Activated B cell treated with CpG ODN at 0.5 μM for 24 hours (primary cell): ENCODE measurements at regions of chr11 and their contacts with region 1.

Region 1: DNA sequence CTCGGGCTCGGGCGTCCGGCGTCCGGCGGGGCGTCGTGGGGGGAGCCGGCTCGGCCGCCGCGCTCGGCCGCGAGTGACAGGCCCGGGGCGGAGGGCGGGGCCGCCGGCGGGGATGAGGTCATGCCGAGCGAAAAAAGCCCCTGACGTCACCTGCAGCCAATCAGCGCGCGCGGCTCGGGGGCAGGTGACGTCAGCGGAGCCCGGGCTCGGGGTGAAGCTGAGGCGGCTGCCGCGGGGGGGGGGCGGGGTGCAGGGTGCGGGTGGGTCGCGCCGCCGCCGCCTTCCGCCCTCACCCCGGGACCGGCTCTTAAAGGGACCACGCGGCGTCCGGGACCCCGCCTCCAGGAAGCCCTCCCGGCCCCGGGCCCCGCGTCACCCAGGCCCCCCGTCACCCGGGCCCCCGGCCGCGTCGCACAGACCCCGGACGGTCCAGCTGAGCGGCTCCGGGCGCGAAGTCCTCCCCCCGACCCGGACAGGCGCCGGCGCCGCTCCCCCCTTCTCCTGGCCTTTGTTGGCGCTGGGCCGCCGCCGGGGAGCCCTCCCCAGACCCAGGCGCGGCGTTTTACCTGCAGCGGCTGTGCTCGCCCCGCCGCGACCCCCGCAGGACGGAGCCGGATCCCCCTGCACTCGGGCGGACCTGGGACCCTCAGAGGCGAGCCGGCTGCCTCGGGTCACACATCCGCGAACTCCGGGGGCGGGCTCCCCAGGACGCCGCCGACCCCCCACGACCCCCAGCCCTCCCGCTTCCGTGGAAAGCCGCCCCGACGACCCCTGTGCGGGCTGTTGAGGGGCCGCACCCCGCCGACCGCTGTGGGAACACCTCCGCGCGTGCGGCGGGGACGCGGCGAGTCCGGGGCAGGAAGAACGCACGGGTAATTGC is at the start of gene DUSP8:
- DNase-seq: peak; percentile 89
- ATAC-seq: peak; percentile 43
- H3K4me3 Mint-ChIP-seq: peak within 1 kb of the TSS; percentile 64
- H3K27ac Mint-ChIP-seq: no peak within 1 kb of the TSS
- H3K4me1 Mint-ChIP-seq: peaks cover 12% of the 10 kb centered on the region
- H3K27me3 Mint-ChIP-seq: peaks cover 22% of the 10 kb centered on the region
- CTCF ChIP-seq: no peak
- total RNA-seq, gene DUSP8: 1.3 and 1.7 TPM in 2 replicates

Region 2: GRCh38 chr11:765025-765801 is 807.2 kb before region 1 on chr11:
- CTCF ChIA-PET with region 1: no interaction called
- POLR2A ChIA-PET with region 1: no interaction called
- intact Hi-C with region 1: no loop called
- DNase-seq: peak; percentile 55
- ATAC-seq: peak; percentile 91
- H3K4me3 Mint-ChIP-seq: no peak overlapping the region
- H3K27ac Mint-ChIP-seq: no peak overlapping the region
- H3K4me1 Mint-ChIP-seq: peaks cover 3% of the 10 kb centered on the region
- H3K27me3 Mint-ChIP-seq: no peaks in the 10 kb centered on the region
- CTCF ChIP-seq: no peak

Region 3: GRCh38 chr11:1087961-1088908 is 484.2 kb before region 1 on chr11:
- CTCF ChIA-PET with region 1: no interaction called
- POLR2A ChIA-PET with region 1: no interaction called
- intact Hi-C with region 1: no loop called
- DNase-seq: no peak
- ATAC-seq: no peak
- H3K4me3 Mint-ChIP-seq: no peak overlapping the region
- H3K27ac Mint-ChIP-seq: no peak overlapping the region
- H3K4me1 Mint-ChIP-seq: no peaks in the 10 kb centered on the region
- H3K27me3 Mint-ChIP-seq: no peaks in the 10 kb centered on the region
- CTCF ChIP-seq: no peak

Region 4: GRCh38 chr11:1202776-1203504 is 369.5 kb before region 1 on chr11:
- CTCF ChIA-PET with region 1: interaction called, 48 read pairs
- POLR2A ChIA-PET with region 1: no interaction called
- intact Hi-C with region 1: loop called (anchors 1 kb)
- DNase-seq: peak; percentile 72
- ATAC-seq: peak; percentile 94
- H3K4me3 Mint-ChIP-seq: no peak overlapping the region
- H3K27ac Mint-ChIP-seq: no peak overlapping the region
- H3K4me1 Mint-ChIP-seq: no peaks in the 10 kb centered on the region
- H3K27me3 Mint-ChIP-seq: no peaks in the 10 kb centered on the region
- CTCF ChIP-seq: no peak

Region 5: DNA sequence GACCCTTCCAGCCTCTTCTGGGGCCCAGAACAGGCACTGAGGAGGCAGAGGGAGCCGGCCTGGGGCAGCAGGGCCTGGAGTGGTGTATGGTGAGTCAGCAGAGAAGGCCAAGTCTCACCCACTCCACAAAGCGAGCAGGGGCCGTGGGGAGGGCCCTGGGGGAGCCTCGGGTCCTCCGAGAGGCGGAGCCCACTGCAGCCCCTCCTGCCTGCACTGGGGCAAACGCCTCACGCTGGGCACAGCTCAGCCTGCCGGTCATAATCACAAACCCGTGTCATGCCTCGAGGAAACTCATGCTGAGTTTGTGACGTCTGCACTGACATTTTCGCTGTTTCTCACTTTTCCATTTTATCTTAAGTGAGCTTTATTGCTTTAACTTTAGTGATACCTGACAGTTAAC is 301.4 kb before region 1 on chr11:
- CTCF ChIA-PET with region 1: no interaction called
- POLR2A ChIA-PET with region 1: no interaction called
- intact Hi-C with region 1: no loop called
- DNase-seq: no peak
- ATAC-seq: no peak
- H3K4me3 Mint-ChIP-seq: no peak overlapping the region
- H3K27ac Mint-ChIP-seq: no peak overlapping the region
- H3K4me1 Mint-ChIP-seq: peaks cover 1% of the 10 kb centered on the region
- H3K27me3 Mint-ChIP-seq: no peaks in the 10 kb centered on the region
- CTCF ChIP-seq: no peak

Region 6: DNA sequence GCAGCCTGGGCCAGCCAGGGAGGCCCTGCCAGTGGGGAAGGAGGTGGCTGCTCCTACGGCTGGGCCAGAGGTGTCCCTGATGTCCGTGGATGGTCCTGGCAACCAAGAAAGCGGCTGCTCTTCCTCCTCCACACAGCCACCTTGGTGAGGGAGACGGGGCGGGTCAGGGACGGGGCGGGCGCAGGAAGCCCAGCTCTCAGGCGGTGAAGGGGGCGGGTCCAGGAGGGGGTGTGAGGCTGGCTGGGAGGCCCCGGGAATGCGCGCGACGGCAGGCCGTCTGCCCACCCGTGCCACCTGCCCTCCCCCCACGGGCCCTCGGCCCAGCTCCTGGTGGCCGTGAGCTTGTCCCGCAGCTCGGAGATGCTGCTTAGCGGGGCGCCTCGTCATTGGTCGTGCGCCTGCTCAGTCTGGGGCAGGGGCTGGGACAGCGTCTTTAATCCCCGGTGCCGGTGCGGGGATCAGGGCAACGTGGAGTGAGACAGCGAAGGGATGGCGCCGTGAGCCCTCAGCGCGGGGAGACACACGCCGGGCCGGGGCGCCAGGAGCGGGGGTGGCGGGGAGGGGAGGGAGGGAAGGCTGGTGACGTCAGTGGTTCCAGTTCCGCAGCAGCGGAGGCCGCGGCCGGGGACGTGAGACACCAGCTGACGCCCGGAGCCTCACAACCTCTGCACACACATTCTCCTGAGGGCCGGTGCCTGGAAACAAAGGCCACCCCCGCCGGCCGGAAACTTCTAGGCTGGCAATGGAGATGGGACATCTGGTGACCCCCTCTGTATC is 189.4 kb before region 1 on chr11:
- CTCF ChIA-PET with region 1: interaction called, 3 read pairs
- POLR2A ChIA-PET with region 1: no interaction called
- intact Hi-C with region 1: loop called (anchors 2 kb)
- DNase-seq: peak; percentile 68
- ATAC-seq: peak; percentile 74
- H3K4me3 Mint-ChIP-seq: peak overlapping the region; percentile 85
- H3K27ac Mint-ChIP-seq: peak overlapping the region; percentile 91
- H3K4me1 Mint-ChIP-seq: peaks cover 31% of the 10 kb centered on the region
- H3K27me3 Mint-ChIP-seq: peaks cover 1% of the 10 kb centered on the region
- CTCF ChIP-seq: no peak

Region 7: DNA sequence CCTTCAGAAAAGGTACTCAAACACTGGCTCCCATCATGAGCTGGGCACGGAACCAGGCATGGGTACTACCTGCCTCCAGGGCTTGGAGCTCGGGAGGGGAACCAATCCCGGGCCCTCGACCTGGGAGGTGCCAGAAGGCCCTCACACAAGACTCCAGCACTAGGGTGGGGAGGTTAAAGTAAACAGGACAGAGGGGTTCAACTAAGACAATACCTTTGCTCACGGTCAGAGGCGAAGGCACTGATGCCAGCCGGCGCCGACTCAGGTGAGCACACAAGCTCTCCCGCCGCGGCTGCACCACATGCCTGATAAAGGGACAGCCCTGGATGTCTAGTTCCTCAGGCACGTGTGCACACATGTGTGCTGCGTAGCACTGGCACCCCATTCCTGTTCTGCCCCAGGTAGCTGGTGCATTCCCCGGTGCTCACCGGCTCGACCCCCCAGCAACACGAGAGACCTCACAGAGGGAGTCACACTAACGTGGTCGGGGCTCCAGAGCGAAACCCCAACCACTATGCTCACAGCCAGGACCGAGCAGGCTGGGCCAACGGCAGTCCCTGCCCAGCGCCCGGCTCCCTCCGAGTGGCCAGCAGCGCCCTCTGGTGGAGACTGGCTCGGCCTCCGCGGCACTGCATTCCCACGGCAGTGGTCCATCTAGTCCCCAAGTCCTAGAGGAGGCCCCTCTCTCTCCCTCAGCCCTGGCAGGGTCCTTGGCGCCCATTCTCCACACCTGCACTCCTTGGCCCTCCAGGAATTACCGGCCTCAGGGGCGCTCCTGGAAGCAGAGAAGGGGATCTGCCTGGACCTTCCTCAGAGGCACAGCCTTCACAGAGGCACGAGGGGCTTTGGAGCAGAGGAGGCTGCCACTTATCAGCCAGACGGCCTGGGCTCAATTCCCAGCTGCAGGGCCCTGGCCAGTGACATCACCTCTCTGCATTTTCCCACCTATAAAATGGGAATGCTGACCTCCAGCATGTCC is 57.1 kb before region 1 on chr11:
- CTCF ChIA-PET with region 1: interaction called, 12 read pairs
- POLR2A ChIA-PET with region 1: no interaction called
- intact Hi-C with region 1: no loop called
- DNase-seq: peak; percentile 74
- ATAC-seq: peak; percentile 87
- H3K4me3 Mint-ChIP-seq: no peak overlapping the region
- H3K27ac Mint-ChIP-seq: no peak overlapping the region
- H3K4me1 Mint-ChIP-seq: peaks cover 52% of the 10 kb centered on the region
- H3K27me3 Mint-ChIP-seq: no peaks in the 10 kb centered on the region
- CTCF ChIP-seq: peak; percentile 53

Region 8: GRCh38 chr11:1546536-1547400 is 25.7 kb before region 1 on chr11:
- CTCF ChIA-PET with region 1: interaction called, 35 read pairs
- POLR2A ChIA-PET with region 1: interaction called, 9 read pairs
- intact Hi-C with region 1: loop called (anchors 1 kb)
- DNase-seq: peak; percentile 50
- ATAC-seq: peak; percentile 67
- H3K4me3 Mint-ChIP-seq: peak overlapping the region; percentile 19
- H3K27ac Mint-ChIP-seq: no peak overlapping the region
- H3K4me1 Mint-ChIP-seq: peaks cover 13% of the 10 kb centered on the region
- H3K27me3 Mint-ChIP-seq: peaks cover 28% of the 10 kb centered on the region
- CTCF ChIP-seq: no peak

Region 9: DNA sequence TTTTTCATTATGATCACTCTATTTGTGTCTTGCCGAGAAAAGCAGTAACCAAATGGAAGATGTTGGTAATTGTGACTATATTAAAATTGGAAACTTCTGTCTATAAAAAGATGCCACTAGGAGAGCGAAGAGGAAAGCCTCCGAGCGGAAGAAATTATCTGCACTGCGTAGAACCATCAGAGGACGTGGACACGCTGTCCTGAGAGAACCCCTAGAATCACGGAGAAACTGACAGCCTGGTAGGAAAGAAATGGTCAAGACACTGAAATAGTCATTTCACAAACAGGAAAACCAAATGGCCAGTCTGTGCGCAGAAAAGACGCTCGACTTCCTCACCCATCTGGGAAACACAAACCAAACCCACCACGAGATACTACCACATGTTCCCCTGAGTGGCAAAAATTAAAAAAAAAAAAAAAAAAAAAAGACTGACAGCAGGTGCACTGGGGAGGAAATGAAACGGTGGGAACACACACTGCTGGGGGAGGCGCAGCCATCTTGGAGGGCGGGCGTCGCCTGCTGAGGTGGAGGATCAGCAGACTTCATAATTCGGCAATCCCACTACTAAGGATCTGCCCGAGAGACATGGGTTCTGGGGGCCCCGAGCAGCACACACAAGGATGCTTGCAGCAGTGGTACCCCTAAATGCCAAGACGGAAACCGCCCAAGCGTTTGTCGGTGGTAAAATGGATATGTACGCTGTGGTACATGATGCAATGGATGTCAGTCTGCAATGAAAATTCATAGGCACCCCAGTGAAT is 156.7 kb after region 1 on chr11:
- CTCF ChIA-PET with region 1: no interaction called
- POLR2A ChIA-PET with region 1: no interaction called
- intact Hi-C with region 1: no loop called
- DNase-seq: no peak
- ATAC-seq: peak; percentile 78
- H3K4me3 Mint-ChIP-seq: peak overlapping the region; percentile 33
- H3K27ac Mint-ChIP-seq: peak overlapping the region; percentile 14
- H3K4me1 Mint-ChIP-seq: peaks cover 30% of the 10 kb centered on the region
- H3K27me3 Mint-ChIP-seq: peaks cover 9% of the 10 kb centered on the region
- CTCF ChIP-seq: no peak